ENCODE measurements at regions of chr12 and their contacts with region 1.

Region 1: DNA sequence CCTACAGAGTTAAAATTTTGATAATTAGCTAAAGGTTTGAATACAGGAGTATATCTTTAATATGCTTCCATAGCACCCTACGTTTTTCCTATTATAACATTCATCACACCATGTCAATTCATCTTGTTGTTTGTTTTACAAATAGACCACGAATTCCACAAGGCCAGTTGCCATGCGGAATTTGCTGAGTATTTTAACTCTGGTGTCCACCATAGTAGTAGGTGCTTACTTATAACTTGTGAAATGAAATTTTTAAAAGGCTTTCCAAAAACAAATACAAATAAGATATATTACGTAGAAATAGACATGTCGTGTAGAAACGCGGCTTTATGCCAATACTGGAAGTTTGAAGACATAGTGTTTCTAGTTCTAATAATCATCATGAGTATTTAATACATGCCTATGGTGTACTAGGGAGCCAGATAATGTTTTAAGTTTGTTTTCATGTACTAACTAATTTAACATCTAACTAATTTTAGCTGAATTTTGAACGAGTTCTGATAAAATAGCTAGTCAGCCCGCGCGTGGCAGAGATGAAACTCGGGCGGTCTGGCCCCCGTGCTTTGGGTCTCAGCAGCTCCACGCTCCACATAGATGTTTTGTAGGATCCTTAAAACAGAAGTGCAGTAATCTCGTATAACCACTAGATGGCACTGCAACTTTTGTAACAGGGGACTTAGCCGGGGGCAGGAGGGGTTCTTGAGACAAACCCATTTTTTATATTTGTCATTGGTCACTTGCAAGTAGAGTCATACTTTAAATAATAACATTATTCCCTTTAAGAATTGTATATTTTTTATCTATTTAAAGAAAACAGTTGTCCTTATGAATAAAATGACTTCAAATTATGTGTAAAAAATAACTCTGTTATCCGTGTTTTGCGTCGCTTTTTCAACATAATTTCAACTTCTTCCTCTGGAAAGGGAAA is 10.2 kb downstream of the CD69 start:
- DNase-seq: peak in 3 of 5 donors; percentile 29 to 51 (median 34)
- ATAC-seq: peak in 3 of 4 donors; percentile 70 to 95 (median 88)
- H3K4me3 ChIP-seq: peak overlapping the region in 7 of 12 donors; percentile 10 to 29 (median 22)
- H3K27ac ChIP-seq: no peak overlapping the region
- H3K4me1 ChIP-seq: peaks cover 0 to 14% (median 0%) of the 10 kb centered on the region in 12 donors
- H3K27me3 ChIP-seq: no peaks in the 10 kb centered on the region
- CTCF ChIP-seq: peak; percentile 78 to 90 (median 84)
- POLR2A ChIP-seq: no peak

Region 2: DNA sequence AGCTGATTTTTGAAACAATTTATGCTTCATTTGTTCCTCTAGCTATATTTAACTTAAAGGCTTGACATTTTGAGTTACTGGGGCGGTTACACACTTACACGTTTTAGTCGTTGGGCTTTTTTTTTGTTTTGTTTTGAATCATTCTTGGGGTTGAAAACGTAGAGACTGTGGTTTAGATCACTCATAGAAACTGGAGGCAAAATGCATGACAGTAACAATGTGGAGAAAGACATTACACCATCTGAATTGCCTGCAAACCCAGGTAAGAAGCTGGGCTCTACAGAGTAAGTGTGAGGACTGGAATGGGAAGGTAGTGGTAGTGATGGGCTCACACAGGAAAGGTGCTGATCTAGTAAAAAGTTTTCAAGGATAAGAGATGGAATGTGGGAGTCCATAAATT is 81.0 kb before region 1 on chr12 and contains the start of gene CLEC2D:
- intact Hi-C with region 1: no loop called
- DNase-seq: no peak
- ATAC-seq: no peak
- H3K4me3 ChIP-seq: peak within 1 kb of the TSS in 1 of 12 donors; percentile 50
- H3K27ac ChIP-seq: peak within 1 kb of the TSS in 1 of 12 donors; percentile 73
- H3K4me1 ChIP-seq: peaks cover 0 to 35% (median 14%) of the 10 kb centered on the region in 12 donors
- H3K27me3 ChIP-seq: no peaks in the 10 kb centered on the region
- CTCF ChIP-seq: no peak
- POLR2A ChIP-seq: no peak
- total RNA-seq, gene CLEC2D: 1.4 to 18.7 (median 1.6) TPM

Region 3: GRCh38 chr12:9797722-9798619 is 47.4 kb after region 1 on chr12:
- intact Hi-C with region 1: loop called in 2 of 10 experiments (anchors 2 to 5 kb)
- DNase-seq: no peak
- ATAC-seq: peak; percentile 47 to 86 (median 64)
- H3K4me3 ChIP-seq: no peak overlapping the region
- H3K27ac ChIP-seq: no peak overlapping the region
- H3K4me1 ChIP-seq: peaks cover 0 to 32% (median 0%) of the 10 kb centered on the region in 12 donors
- H3K27me3 ChIP-seq: no peaks in the 10 kb centered on the region
- CTCF ChIP-seq: peak in 11 of 12 donors; percentile 4 to 46 (median 29)
- POLR2A ChIP-seq: no peak

Measured in heart left ventricle (tissue), 16 donors.